Thyroid gland (tissue), 4 donors: ENCODE measurements at regions of chr1 and their contacts with region 1.

Region 1: GRCh38 chr1:204503122-204503912 is 8.7 kb upstream of the PIK3C2B start:
- DNase-seq: no peak
- H3K4me3 ChIP-seq: no peak overlapping the region
- H3K27ac ChIP-seq: no peak overlapping the region
- H3K4me1 ChIP-seq: no peaks in the 10 kb centered on the region
- H3K27me3 ChIP-seq: no peaks in the 10 kb centered on the region
- CTCF ChIP-seq: peak; percentile 36 to 90 (median 73)
- POLR2A ChIP-seq: no peak

Region 2: GRCh38 chr1:204446370-204447111 is 56.8 kb before region 1 on chr1:
- intact Hi-C with region 1: loop called (anchors 5 kb)
- DNase-seq: peak; percentile 80 to 82
- H3K4me3 ChIP-seq: no peak overlapping the region
- H3K27ac ChIP-seq: no peak overlapping the region
- H3K4me1 ChIP-seq: peaks cover 6 to 21% of the 10 kb centered on the region in 2 donors
- H3K27me3 ChIP-seq: no peaks in the 10 kb centered on the region
- CTCF ChIP-seq: peak; percentile 74 to 88 (median 82)
- POLR2A ChIP-seq: no peak

Region 3: GRCh38 chr1:204782118-204782700 is 278.9 kb after region 1 on chr1:
- intact Hi-C with region 1: no loop called
- DNase-seq: no peak
- H3K4me3 ChIP-seq: no peak overlapping the region
- H3K27ac ChIP-seq: no peak overlapping the region
- H3K4me1 ChIP-seq: no peaks in the 10 kb centered on the region
- H3K27me3 ChIP-seq: no peaks in the 10 kb centered on the region
- CTCF ChIP-seq: no peak
- POLR2A ChIP-seq: no peak